Prostate gland (tissue), 2 donors: ENCODE measurements at regions of chr6 and their contacts with region 1.

Region 1: GRCh38 chr6:168916576-168917207 is 337.0 kb downstream of the THBS2 start:
- DNase-seq: no peak
- H3K4me3 ChIP-seq: no peak overlapping the region
- H3K27ac ChIP-seq: no peak overlapping the region
- H3K4me1 ChIP-seq: no peaks in the 10 kb centered on the region
- H3K27me3 ChIP-seq: no peaks in the 10 kb centered on the region
- CTCF ChIP-seq: no peak
- POLR2A ChIP-seq: no peak

Region 2: DNA sequence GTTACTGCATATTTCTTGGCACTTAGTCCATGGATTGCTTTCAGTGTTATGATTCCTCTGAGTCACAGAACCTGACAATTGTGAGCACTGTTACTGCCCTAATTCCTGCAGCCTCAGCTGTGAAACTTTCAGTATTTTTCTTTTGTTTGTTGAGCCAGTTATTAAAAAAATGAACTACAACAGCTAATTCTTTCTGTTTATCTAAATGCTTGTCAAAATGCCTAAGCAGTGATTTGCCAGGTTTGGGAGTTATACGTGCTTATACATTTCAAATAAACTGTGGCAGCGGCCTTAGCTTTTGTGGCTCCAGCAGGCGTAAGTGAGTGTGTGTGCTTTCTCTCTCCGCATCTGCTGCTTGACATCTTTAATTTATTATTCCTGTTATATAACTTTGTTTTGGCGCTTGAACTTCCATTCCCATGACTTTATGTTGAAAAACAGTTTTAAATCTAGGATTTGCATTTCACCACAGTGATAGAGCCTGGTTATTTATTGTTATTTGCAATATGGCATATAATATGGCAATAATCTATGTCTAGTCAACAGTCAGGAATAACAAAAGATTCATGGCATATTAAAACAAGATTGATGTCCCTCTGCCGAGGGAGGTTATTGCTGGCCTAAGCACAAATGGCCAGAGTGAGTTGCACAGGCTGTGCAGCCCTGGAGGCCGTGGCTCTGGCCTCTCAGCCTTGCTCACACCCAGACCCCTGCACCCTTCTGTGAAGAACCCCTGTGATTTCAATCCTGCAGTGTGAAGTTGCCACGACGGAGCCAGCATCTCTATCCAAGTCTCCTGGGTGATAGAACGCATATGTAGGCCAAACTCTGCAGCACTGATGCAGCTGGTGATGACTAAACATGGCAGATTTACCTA is 33.5 kb after region 1 on chr6:
- intact Hi-C with region 1: loop called (anchors 5 kb)
- DNase-seq: no peak
- H3K4me3 ChIP-seq: no peak overlapping the region
- H3K27ac ChIP-seq: peak overlapping the region in 1 of 2 donors; percentile 30
- H3K4me1 ChIP-seq: no peaks in the 10 kb centered on the region
- H3K27me3 ChIP-seq: no peaks in the 10 kb centered on the region
- CTCF ChIP-seq: no peak
- POLR2A ChIP-seq: no peak

Region 3: DNA sequence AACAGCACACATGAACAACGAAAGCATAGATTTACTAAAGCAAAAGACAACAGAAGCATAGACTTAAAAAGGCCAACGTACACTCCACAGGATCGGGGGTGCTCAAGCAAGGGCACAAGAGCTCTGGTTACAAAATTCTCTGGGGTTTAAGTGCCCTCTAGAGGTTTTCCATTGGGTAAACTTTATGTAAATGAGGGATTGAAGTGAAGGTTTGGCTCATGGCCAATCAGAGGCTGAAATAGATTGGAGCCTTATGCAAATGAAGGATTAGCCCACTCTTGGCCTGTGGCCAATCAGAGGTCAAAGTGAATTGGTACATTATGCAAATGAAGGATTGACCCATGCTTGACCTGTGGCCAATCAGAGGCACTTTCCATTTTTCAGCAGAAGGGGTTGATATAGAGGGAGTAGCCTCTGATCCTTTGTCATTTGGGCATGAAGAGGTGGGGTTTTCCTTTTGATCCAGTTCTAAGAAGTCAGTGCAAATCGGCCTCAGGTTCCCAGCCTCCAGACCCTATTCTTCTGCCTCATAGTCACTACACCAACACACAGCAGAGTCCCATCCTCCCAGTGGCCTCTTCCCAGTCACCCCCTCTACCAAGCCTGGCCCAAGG is 92.1 kb after region 1 on chr6:
- intact Hi-C with region 1: loop called (anchors 10 kb)
- DNase-seq: no peak
- H3K4me3 ChIP-seq: no peak overlapping the region
- H3K27ac ChIP-seq: no peak overlapping the region
- H3K4me1 ChIP-seq: no peaks in the 10 kb centered on the region
- H3K27me3 ChIP-seq: no peaks in the 10 kb centered on the region
- CTCF ChIP-seq: no peak
- POLR2A ChIP-seq: no peak